GM12878 (cell line): ENCODE measurements at regions of chr5 and their contacts with region 1.

Region 1: DNA sequence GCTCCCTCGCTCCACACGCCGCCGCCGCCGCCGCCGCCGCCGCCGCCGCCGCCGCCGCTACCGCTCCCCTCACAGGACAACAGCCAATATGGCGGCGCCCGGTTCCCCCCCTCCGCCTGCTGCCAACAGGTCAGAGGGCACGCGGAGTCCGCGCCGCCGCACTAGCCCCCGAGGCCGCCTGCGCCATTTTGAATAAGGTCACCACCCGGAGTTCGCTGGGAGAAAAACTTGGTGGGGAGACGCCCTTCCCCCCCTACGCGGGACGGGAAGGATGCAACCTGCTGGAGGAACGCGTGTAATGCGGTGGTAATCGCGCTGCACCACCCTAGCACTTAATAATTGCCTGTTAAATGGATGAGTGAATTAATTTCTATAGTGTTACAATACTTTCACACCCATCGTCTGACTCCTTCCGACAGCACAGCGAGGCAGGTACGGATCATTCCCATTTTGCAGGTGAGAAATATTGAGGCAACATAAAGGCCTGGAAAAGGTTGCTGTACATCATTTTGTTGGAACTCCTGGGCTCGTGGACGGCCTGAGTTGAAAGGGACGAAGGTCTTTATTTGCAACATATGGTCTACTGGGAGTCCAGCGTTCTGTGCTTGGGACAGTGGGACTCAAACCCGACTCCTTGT is at the start of gene FAM193B:
- DNase-seq: peak; percentile 57
- ATAC-seq: peak; percentile 97
- H3K4me3 ChIP-seq: peak within 1 kb of the TSS; percentile 92
- H3K27ac ChIP-seq: peak within 1 kb of the TSS; percentile 57
- H3K4me1 ChIP-seq: peaks cover 8% of the 10 kb centered on the region
- H3K27me3 ChIP-seq: no peaks in the 10 kb centered on the region
- CTCF ChIP-seq: no peak
- EP300 ChIP-seq: no peak
- POLR2A ChIP-seq: peak; percentile 50
- RAD21 ChIP-seq: no peak
- polyA plus RNA-seq, gene FAM193B: 3.3 to 11.1 TPM

Region 2: GRCh38 chr5:177516604-177517568 is 37.7 kb before region 1 on chr5 and contains the start of gene DDX41:
- CTCF ChIA-PET with region 1: no interaction called
- POLR2A ChIA-PET with region 1: interaction called, 3 read pairs
- RAD21 ChIA-PET with region 1: no interaction called
- SMC1A ChIA-PET with region 1: interaction called, 3 read pairs
- in situ Hi-C with region 1: no loop called
- intact Hi-C with region 1: loop called (anchors 5 kb)
- DNase-seq: peak; percentile 90
- ATAC-seq: peak; percentile 92
- H3K4me3 ChIP-seq: peak within 1 kb of the TSS; percentile 77
- H3K27ac ChIP-seq: peak within 1 kb of the TSS; percentile 66
- H3K4me1 ChIP-seq: peaks cover 12% of the 10 kb centered on the region
- H3K27me3 ChIP-seq: no peaks in the 10 kb centered on the region
- CTCF ChIP-seq: no peak
- EP300 ChIP-seq: no peak
- POLR2A ChIP-seq: no peak
- RAD21 ChIP-seq: no peak
- polyA plus RNA-seq, gene DDX41: 32.7 to 67.6 TPM

Region 3: DNA sequence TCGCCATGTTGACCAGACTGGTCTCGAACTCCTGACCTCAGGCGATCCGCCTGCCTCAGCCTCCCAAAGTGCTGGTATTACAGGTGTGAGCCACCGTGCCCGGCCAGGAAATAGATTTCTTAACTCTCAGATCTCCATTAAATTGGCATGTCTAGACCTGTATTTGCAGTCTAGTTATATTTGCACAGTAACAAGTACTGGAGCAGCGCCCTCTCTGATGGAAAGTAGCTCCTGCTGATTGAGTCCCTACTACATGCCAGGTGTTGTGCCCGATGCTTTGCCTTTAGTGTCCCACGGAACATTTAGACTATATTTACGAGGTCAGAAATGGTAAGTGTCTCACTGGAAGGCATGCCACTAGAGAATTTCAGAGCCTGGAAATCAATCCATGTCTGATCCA is 21.6 kb after region 1 on chr5:
- CTCF ChIA-PET with region 1: no interaction called
- POLR2A ChIA-PET with region 1: no interaction called
- RAD21 ChIA-PET with region 1: no interaction called
- SMC1A ChIA-PET with region 1: no interaction called
- in situ Hi-C with region 1: no loop called
- intact Hi-C with region 1: no loop called
- DNase-seq: no peak
- ATAC-seq: no peak
- H3K4me3 ChIP-seq: no peak overlapping the region
- H3K27ac ChIP-seq: no peak overlapping the region
- H3K4me1 ChIP-seq: no peaks in the 10 kb centered on the region
- H3K27me3 ChIP-seq: no peaks in the 10 kb centered on the region
- CTCF ChIP-seq: no peak
- EP300 ChIP-seq: no peak
- POLR2A ChIP-seq: no peak
- RAD21 ChIP-seq: no peak